ENCODE measurements at regions of chr15 and their contacts with region 1.

Region 1: DNA sequence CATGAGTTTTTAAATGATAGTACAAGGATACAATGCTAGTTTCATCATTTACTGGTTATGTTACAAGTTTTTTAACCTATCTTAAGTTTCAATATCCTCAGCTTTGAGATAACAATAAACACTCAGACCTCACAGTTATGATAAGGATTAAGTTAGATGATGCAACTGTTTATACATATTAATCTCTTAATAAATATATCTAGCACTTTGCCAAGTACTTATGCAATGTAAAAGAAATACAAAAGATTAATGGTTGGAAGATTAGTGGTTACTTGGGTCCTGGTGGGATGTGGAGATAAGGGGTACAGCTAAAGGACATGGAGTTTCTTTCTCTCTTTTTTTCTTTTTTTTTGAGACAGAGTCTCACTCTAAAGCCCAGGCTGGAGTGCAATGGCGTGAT is 12.0 kb downstream of the SPPL2A start:
- DNase-seq: no peak
- ATAC-seq: peak in 1 of 3 donors; percentile 33
- H3K4me3 ChIP-seq: no peak overlapping the region
- H3K4me3 Mint-ChIP-seq: no peak overlapping the region
- H3K27ac ChIP-seq: no peak overlapping the region
- H3K27ac Mint-ChIP-seq: peak overlapping the region in 1 of 2 donors; percentile 8
- H3K4me1 ChIP-seq: peaks cover 9% of the 10 kb centered on the region
- H3K4me1 Mint-ChIP-seq: peaks cover 43 to 52% of the 10 kb centered on the region in 2 donors
- H3K27me3 ChIP-seq: no peaks in the 10 kb centered on the region
- H3K27me3 Mint-ChIP-seq: no peaks in the 10 kb centered on the region
- CTCF ChIP-seq: no peak

Region 2: GRCh38 chr15:50686468-50687301 is 66.8 kb before region 1 on chr15 and contains the start of gene TRPM7:
- intact Hi-C with region 1: loop called (anchors 5 kb)
- DNase-seq: peak; percentile 92 to 96
- ATAC-seq: peak; percentile 76 to 96 (median 88)
- H3K4me3 ChIP-seq: peak within 1 kb of the TSS; percentile 91
- H3K4me3 Mint-ChIP-seq: peak within 1 kb of the TSS; percentile 99
- H3K27ac ChIP-seq: peak within 1 kb of the TSS; percentile 94
- H3K27ac Mint-ChIP-seq: peak within 1 kb of the TSS; percentile 97
- H3K4me1 ChIP-seq: peaks cover 20% of the 10 kb centered on the region
- H3K4me1 Mint-ChIP-seq: peaks cover 42 to 49% of the 10 kb centered on the region in 2 donors
- H3K27me3 ChIP-seq: no peaks in the 10 kb centered on the region
- H3K27me3 Mint-ChIP-seq: no peaks in the 10 kb centered on the region
- CTCF ChIP-seq: no peak
- total RNA-seq, gene TRPM7: 41.8 to 54.4 (median 50.9) TPM

Region 3: GRCh38 chr15:50702762-50703334 is 50.6 kb before region 1 on chr15:
- intact Hi-C with region 1: no loop called
- DNase-seq: no peak
- ATAC-seq: no peak
- H3K4me3 ChIP-seq: no peak overlapping the region
- H3K4me3 Mint-ChIP-seq: no peak overlapping the region
- H3K27ac ChIP-seq: no peak overlapping the region
- H3K27ac Mint-ChIP-seq: no peak overlapping the region
- H3K4me1 ChIP-seq: no peaks in the 10 kb centered on the region
- H3K4me1 Mint-ChIP-seq: no peaks in the 10 kb centered on the region
- H3K27me3 ChIP-seq: no peaks in the 10 kb centered on the region
- H3K27me3 Mint-ChIP-seq: no peaks in the 10 kb centered on the region
- CTCF ChIP-seq: no peak

Region 4: DNA sequence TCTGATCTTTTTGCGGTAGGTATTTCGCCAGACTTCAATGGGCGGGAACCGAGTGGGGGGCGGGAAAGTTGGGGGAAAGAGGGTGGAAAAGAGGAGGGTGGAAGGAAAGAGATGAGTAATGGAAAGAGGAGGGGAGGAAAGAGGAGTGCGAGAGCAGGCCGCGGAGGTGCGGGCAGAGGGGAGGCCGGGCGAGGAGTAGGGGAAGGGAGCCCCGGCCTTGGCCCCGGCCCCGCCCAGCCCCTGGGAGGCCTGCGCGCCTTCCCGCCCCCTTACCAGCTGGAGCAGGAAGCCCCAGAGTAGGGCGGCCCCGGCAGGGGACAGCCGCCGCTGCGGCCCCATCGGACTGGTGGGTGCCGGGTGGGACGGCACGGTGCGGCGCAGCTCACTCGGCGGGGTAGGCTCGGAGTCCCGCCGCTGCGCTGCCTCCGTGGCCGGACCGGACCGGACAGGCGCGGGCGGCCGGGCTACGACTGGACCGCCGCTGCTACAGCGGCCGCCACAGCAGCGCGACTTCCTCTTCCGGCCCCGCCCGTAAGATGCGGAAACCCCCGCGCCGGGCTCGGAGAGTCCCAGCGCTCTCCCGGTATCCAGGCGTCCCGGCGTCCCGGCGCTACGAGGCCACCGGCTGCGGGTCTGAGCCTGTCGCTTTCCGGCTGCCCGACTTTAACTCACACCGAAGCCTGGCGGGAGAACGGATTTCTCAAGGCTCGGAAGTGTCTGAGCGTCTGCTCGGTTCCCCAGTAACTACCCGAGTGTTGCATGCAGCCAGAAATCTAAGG is 11.9 kb after region 1 on chr15 and contains the start of gene SPPL2A:
- intact Hi-C with region 1: loop called (anchors 1 kb)
- DNase-seq: peak; percentile 83 to 87
- ATAC-seq: peak; percentile 81 to 92 (median 85)
- H3K4me3 ChIP-seq: peak within 1 kb of the TSS; percentile 85
- H3K4me3 Mint-ChIP-seq: peak within 1 kb of the TSS; percentile 95
- H3K27ac ChIP-seq: peak within 1 kb of the TSS; percentile 94
- H3K27ac Mint-ChIP-seq: peak within 1 kb of the TSS; percentile 93 to 97
- H3K4me1 ChIP-seq: peaks cover 18% of the 10 kb centered on the region
- H3K4me1 Mint-ChIP-seq: peaks cover 48 to 55% of the 10 kb centered on the region in 2 donors
- H3K27me3 ChIP-seq: no peaks in the 10 kb centered on the region
- H3K27me3 Mint-ChIP-seq: no peaks in the 10 kb centered on the region
- CTCF ChIP-seq: no peak
- total RNA-seq, gene SPPL2A: 104 to 122 (median 120) TPM

Region 5: GRCh38 chr15:50774450-50774849 is 21.0 kb after region 1 on chr15:
- intact Hi-C with region 1: loop called (anchors 1 kb)
- DNase-seq: peak in 1 of 2 donors; percentile 63
- ATAC-seq: peak; percentile 81 to 99 (median 97)
- H3K4me3 ChIP-seq: no peak overlapping the region
- H3K4me3 Mint-ChIP-seq: no peak overlapping the region
- H3K27ac ChIP-seq: no peak overlapping the region
- H3K27ac Mint-ChIP-seq: peak overlapping the region; percentile 81 to 91
- H3K4me1 ChIP-seq: peaks cover 8% of the 10 kb centered on the region
- H3K4me1 Mint-ChIP-seq: peaks cover 7 to 15% of the 10 kb centered on the region in 2 donors
- H3K27me3 ChIP-seq: no peaks in the 10 kb centered on the region
- H3K27me3 Mint-ChIP-seq: no peaks in the 10 kb centered on the region
- CTCF ChIP-seq: no peak

Region 6: GRCh38 chr15:50798684-50799083 is 45.2 kb after region 1 on chr15:
- intact Hi-C with region 1: no loop called
- DNase-seq: no peak
- ATAC-seq: no peak
- H3K4me3 ChIP-seq: no peak overlapping the region
- H3K4me3 Mint-ChIP-seq: no peak overlapping the region
- H3K27ac ChIP-seq: no peak overlapping the region
- H3K27ac Mint-ChIP-seq: no peak overlapping the region
- H3K4me1 ChIP-seq: no peaks in the 10 kb centered on the region
- H3K4me1 Mint-ChIP-seq: no peaks in the 10 kb centered on the region
- H3K27me3 ChIP-seq: no peaks in the 10 kb centered on the region
- H3K27me3 Mint-ChIP-seq: no peaks in the 10 kb centered on the region
- CTCF ChIP-seq: no peak

Region 7: GRCh38 chr15:50865515-50866353 is 112.3 kb after region 1 on chr15:
- intact Hi-C with region 1: no loop called
- DNase-seq: no peak
- ATAC-seq: no peak
- H3K4me3 ChIP-seq: no peak overlapping the region
- H3K4me3 Mint-ChIP-seq: no peak overlapping the region
- H3K27ac ChIP-seq: no peak overlapping the region
- H3K27ac Mint-ChIP-seq: no peak overlapping the region
- H3K4me1 ChIP-seq: no peaks in the 10 kb centered on the region
- H3K4me1 Mint-ChIP-seq: no peaks in the 10 kb centered on the region
- H3K27me3 ChIP-seq: no peaks in the 10 kb centered on the region
- H3K27me3 Mint-ChIP-seq: peaks cover 0 to 4% of the 10 kb centered on the region in 2 donors
- CTCF ChIP-seq: no peak

Region 8: GRCh38 chr15:50876989-50877360 is 123.5 kb after region 1 on chr15:
- intact Hi-C with region 1: loop called (anchors 1 kb)
- DNase-seq: peak; percentile 50 to 88
- ATAC-seq: peak; percentile 49 to 65 (median 59)
- H3K4me3 ChIP-seq: peak overlapping the region; percentile 30
- H3K4me3 Mint-ChIP-seq: peak overlapping the region; percentile 82
- H3K27ac ChIP-seq: no peak overlapping the region
- H3K27ac Mint-ChIP-seq: peak overlapping the region; percentile 56 to 79
- H3K4me1 ChIP-seq: peaks cover 16% of the 10 kb centered on the region
- H3K4me1 Mint-ChIP-seq: peaks cover 24 to 38% of the 10 kb centered on the region in 2 donors
- H3K27me3 ChIP-seq: no peaks in the 10 kb centered on the region
- H3K27me3 Mint-ChIP-seq: peaks cover 7 to 8% of the 10 kb centered on the region in 2 donors
- CTCF ChIP-seq: peak; percentile 99